BJ (cell line): ENCODE measurements at regions of chr22 and their contacts with region 1.

Region 1: DNA sequence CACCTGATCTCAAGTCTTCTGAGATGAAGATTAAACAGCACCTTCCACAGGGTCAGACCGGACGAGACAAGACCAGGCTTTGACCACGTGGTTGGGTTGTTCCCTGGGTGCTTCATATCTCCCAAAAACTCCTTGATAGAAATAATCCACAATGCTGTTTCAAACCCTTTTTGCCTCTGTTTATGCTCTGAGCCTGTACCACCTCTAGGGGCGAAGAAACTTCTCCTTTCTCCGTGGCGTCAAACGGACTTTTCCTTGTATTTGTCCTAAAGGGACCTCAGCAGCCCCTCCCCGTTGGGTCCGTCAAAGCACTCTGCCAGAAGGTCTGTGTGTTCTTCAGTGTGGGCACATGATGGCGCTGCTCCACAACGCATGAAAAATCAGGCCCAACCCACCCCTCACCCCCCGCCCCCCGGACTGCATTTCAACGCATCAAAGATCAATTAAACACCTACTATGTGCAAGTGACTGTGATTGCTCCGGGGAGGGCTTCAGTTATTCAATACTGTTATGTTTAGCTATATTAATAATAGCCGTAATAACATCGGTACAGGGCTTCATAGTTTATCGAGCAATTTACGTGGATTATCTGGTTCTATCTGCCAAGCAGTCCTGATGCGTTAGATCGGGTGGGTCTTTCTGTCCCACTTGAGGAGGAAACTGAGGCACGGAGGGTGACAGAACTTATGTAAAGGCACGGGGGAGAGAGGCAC is 17.3 kb upstream of the EIF3D start:
- DNase-seq: no peak
- H3K4me3 ChIP-seq: no peak overlapping the region
- H3K27me3 ChIP-seq: peaks cover 6% of the 10 kb centered on the region
- CTCF ChIP-seq: peak; percentile 71

Region 2: DNA sequence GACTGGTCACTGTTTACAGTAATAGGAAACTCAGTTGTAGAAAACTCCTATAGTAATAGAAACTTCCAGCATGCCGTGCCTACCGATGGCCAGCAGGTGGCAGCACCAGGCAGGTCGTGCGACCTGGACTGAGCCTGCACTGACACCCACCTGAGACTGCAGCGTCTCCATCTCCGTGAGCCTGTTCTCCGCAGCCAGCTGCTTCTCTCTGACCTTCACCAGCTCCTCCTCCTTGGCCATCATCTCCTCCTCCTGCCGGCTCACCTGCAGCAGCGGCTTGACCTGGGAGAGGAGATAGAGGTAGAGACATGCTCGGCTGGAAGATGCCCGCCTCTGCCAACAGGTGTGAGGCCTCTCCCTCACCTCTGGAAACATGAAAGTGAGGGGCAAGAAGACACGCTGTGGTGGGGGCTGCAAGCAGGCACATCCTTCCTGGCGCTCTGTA is 244.8 kb before region 1 on chr22:
- CTCF ChIA-PET with region 1: no interaction called
- POLR2A ChIA-PET with region 1: no interaction called
- DNase-seq: no peak
- H3K4me3 ChIP-seq: no peak overlapping the region
- H3K27me3 ChIP-seq: no peaks in the 10 kb centered on the region
- CTCF ChIP-seq: peak; percentile 90

Region 3: GRCh38 chr22:36613958-36614357 is 67.7 kb after region 1 on chr22:
- CTCF ChIA-PET with region 1: no interaction called
- POLR2A ChIA-PET with region 1: no interaction called
- DNase-seq: no peak
- H3K4me3 ChIP-seq: no peak overlapping the region
- H3K27me3 ChIP-seq: peaks cover 16% of the 10 kb centered on the region
- CTCF ChIP-seq: no peak

Region 4: DNA sequence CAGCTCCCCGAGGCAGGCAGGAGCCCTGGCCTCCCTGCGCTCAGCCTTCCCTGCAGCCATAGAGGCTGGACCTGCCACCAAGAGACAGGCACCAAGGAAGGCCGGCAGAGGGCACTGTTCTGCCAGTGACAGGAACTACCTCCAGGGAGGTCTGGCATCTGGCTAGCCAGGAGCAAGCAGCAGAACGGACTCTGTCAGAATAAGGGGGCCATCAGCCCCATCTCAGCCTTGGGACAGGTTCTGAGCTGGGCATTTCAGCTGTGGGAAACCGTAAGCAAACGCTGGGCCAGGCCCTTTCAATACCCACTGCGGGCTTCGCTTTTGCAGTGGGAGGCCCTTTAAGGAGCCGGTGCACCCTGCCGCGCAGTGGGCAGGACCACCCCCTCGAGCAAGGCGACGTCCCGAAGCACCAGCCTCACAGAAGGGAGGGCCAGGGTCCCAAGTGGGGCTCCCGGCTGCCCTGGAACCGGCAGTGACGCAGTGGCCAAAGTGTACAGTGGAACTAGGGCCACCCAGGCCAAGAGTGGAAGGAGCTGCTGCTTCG is 211.5 kb after region 1 on chr22:
- CTCF ChIA-PET with region 1: interaction called, 10 read pairs
- POLR2A ChIA-PET with region 1: no interaction called
- DNase-seq: no peak
- H3K4me3 ChIP-seq: no peak overlapping the region
- H3K27me3 ChIP-seq: peaks cover 4% of the 10 kb centered on the region
- CTCF ChIP-seq: peak; percentile 89